PC-9 (cell line): ENCODE measurements at regions of chr17 and their contacts with region 1.

Region 1: GRCh38 chr17:65794572-65794971 is 233.1 kb upstream of the AXIN2 start:
- DNase-seq: no peak
- H3K4me3 ChIP-seq: no peak overlapping the region
- H3K27ac ChIP-seq: no peak overlapping the region
- H3K4me1 ChIP-seq: no peaks in the 10 kb centered on the region
- H3K27me3 ChIP-seq: no peaks in the 10 kb centered on the region
- CTCF ChIP-seq: peak; percentile 63

Region 2: GRCh38 chr17:65455972-65456343 is 338.6 kb before region 1 on chr17:
- CTCF ChIA-PET with region 1: no interaction called
- POLR2A ChIA-PET with region 1: no interaction called
- intact Hi-C with region 1: loop called (anchors 2 kb)
- DNase-seq: no peak
- H3K4me3 ChIP-seq: no peak overlapping the region
- H3K27ac ChIP-seq: no peak overlapping the region
- H3K4me1 ChIP-seq: peaks cover 15% of the 10 kb centered on the region
- H3K27me3 ChIP-seq: no peaks in the 10 kb centered on the region
- CTCF ChIP-seq: peak; percentile 44; the same call in 1 of the 2 replicates

Region 3: GRCh38 chr17:66191593-66192382 is 397.2 kb after region 1 on chr17 and contains the start of gene CEP112:
- CTCF ChIA-PET with region 1: no interaction called
- POLR2A ChIA-PET with region 1: no interaction called
- intact Hi-C with region 1: no loop called
- DNase-seq: peak in 1 of 2 experiments; percentile 73
- H3K4me3 ChIP-seq: peak within 1 kb of the TSS; percentile 91
- H3K27ac ChIP-seq: no peak within 1 kb of the TSS
- H3K4me1 ChIP-seq: peaks cover 15% of the 10 kb centered on the region
- H3K27me3 ChIP-seq: no peaks in the 10 kb centered on the region
- CTCF ChIP-seq: no peak
- total RNA-seq, gene CEP112: 4.3 and 6.3 TPM in 2 replicates